ENCODE measurements at regions of chr3 and their contacts with region 1.

Region 1: GRCh38 chr3:17901893-17902292 is 159.5 kb upstream of the TBC1D5 start:
- ATAC-seq: peak in 3 of 8 experiments; percentile 23 to 36 (median 27)
- H3K4me3 ChIP-seq: no peak overlapping the region
- H3K27ac ChIP-seq: no peak overlapping the region
- H3K4me1 ChIP-seq: no peaks in the 10 kb centered on the region

Region 2: DNA sequence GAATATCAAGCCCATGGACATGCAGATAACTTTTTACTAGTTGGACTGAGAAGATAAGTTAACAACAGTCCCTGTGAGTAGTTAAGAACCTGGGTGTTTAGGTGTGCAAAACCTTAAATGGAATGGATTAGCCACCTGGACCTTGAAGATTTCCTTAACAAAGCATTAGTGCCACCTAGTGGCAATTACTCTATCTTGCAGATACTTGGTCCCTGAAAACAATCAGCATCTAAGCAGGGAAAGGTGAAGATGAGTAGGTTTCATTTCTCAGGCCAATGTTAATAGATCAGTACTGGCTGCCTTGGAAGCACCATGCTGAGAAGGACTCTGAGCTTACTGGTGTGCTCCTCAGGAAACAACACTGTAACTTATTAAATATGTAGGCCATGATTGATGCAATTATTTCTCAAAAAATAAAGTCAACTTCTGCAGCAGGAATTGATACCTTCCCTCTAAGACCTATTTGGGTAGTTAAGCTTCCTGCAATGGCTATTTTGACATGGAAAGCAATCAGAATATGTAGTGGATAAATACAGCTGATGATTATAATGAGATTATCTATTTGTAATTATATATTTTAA is 488.9 kb before region 1 on chr3:
- in situ Hi-C with region 1: no loop called
- ATAC-seq: peak in 4 of 8 experiments; percentile 23 to 81 (median 60)
- H3K4me3 ChIP-seq: no peak overlapping the region
- H3K27ac ChIP-seq: no peak overlapping the region
- H3K4me1 ChIP-seq: no peaks in the 10 kb centered on the region

Region 3: DNA sequence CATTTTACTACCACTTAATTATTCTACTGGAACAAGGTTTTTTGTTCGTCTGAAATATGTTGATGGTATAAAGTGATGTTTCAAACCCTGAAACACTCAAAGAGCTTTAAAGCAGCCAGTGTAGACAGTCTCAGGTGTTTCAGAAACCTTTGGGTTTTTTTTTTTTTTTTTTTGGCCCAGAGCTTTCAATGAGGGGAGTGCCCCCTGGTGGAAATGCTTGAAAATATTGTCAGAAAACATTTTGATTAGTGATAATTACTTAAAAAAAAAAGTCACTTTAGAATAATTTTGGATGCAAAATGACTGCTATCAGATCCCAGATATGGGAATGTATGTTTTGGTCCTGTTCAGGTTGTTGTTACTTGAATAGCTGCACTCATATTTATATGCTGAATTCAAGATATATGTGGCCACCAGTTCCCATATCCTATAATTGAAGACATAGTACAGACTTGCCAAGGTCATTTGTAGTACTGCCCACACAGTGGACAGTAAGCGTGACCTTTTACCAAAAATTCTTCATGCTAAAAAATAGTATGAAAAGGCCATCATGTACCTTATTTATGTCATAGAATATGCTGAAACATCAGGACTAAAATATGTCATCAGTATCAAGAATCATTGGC is 487.3 kb after region 1 on chr3:
- in situ Hi-C with region 1: loop called in 1 of 9 experiments (anchors 25 kb)
- ATAC-seq: no peak
- H3K4me3 ChIP-seq: no peak overlapping the region
- H3K27ac ChIP-seq: no peak overlapping the region
- H3K4me1 ChIP-seq: no peaks in the 10 kb centered on the region

Measured in motor neuron (in vitro differentiated cells).